ENCODE measurements at regions of chr4 and their contacts with region 1.

Region 1: DNA sequence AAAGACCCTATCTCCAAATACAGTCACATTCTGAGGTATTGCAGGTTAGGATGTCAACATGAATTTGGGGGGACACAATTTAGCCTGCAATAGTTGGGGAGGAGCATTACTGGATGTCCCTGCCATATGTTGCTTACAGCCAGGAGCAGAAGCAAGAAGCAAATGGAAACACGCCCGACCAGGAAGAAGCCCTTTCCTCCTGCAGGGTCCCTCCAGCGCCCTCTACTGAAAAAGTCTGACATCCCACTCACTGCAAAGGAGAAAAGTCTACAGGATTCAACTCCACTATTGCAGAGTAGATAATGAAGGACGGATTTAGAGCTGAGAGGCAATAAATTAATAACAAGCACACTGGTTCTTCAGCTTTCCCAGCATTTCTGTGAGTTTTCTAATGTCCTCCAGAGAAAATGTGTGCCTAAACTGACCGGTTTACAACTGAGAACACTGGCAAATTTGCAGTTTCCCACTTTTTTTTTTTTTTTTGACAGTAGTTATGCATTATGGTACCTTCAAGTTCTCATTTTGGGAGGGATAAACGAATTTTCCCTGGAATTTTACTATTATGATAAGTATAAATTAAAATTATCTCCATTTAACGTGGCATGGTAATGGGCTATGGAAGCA is 31.7 kb downstream of the COQ2 start:
- DNase-seq: peak; percentile 91

Region 2: GRCh38 chr4:83074086-83074704 is 178.7 kb before region 1 on chr4:
- in situ Hi-C with region 1: loop called (anchors 25 kb)
- DNase-seq: peak; percentile 76

Measured in KBM-7 (cell line).